Caco-2 (cell line): ENCODE measurements at regions of chr3 and their contacts with region 1.

Region 1: GRCh38 chr3:4067893-4068292 is 235.3 kb upstream of the SETMAR start:
- DNase-seq: no peak
- H3K4me3 ChIP-seq: no peak overlapping the region
- H3K4me3 Mint-ChIP-seq: no peak overlapping the region
- H3K27ac Mint-ChIP-seq: no peak overlapping the region
- H3K4me1 ChIP-seq: peaks cover 45% of the 10 kb centered on the region
- H3K4me1 Mint-ChIP-seq: peaks cover 21% of the 10 kb centered on the region
- H3K27me3 ChIP-seq: no peaks in the 10 kb centered on the region
- H3K27me3 Mint-ChIP-seq: no peaks in the 10 kb centered on the region
- CTCF ChIP-seq: no peak

Region 2: DNA sequence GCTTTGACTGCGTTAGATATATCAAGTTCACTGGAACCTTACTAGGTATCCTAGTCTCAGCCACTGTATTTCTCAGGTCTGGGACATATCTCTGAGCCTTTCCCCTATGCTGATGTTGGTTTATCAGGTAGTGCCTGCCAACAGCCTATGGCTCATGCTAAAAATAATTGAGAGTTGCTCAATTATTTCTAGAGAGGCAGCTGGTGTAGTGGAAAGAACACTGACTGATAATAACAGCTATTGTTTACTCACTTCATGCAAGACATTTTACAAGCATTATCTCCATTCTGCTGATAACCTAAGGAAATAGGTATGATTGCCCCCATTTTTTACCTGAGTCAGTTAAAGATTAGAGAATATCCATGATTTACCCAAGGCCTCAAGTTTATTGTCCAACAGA is 37.3 kb before region 1 on chr3:
- CTCF ChIA-PET with region 1: no interaction called
- POLR2A ChIA-PET with region 1: no interaction called
- intact Hi-C with region 1: loop called (anchors 2 kb)
- DNase-seq: no peak
- H3K4me3 ChIP-seq: no peak overlapping the region
- H3K4me3 Mint-ChIP-seq: no peak overlapping the region
- H3K27ac Mint-ChIP-seq: no peak overlapping the region
- H3K4me1 ChIP-seq: peaks cover 23% of the 10 kb centered on the region
- H3K4me1 Mint-ChIP-seq: peaks cover 10% of the 10 kb centered on the region
- H3K27me3 ChIP-seq: no peaks in the 10 kb centered on the region
- H3K27me3 Mint-ChIP-seq: no peaks in the 10 kb centered on the region
- CTCF ChIP-seq: no peak

Region 3: DNA sequence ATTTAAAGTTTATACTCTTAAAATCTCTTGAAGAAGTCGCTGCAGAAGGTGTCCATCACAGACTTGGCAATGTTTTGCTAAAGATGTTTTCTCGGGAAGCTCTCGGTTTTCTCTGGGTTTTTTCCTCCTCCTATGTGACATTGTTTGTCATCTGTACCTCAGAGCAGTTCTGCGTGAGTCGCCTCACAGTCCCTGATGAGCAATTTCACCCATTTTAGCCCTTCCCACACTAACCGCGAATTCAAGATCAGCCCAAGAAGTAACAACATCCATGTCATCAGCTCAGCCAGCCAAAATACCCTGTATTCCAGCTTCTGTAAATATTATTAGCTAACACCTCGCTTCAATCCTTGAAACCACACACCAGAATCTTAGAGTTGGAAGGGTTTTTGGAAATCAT is 11.0 kb after region 1 on chr3:
- CTCF ChIA-PET with region 1: no interaction called
- POLR2A ChIA-PET with region 1: no interaction called
- intact Hi-C with region 1: loop called (anchors 1 kb)
- DNase-seq: no peak
- H3K4me3 ChIP-seq: no peak overlapping the region
- H3K4me3 Mint-ChIP-seq: no peak overlapping the region
- H3K27ac Mint-ChIP-seq: peak overlapping the region; percentile 72
- H3K4me1 ChIP-seq: peaks cover 15% of the 10 kb centered on the region
- H3K4me1 Mint-ChIP-seq: peaks cover 17% of the 10 kb centered on the region
- H3K27me3 ChIP-seq: no peaks in the 10 kb centered on the region
- H3K27me3 Mint-ChIP-seq: no peaks in the 10 kb centered on the region
- CTCF ChIP-seq: no peak